ENCODE measurements at regions of chr2 and their contacts with region 1.

Region 1: GRCh38 chr2:183292028-183292427 is 167.8 kb downstream of the NUP35 start:
- DNase-seq: no peak
- H3K4me3 Mint-ChIP-seq: no peak overlapping the region
- H3K27ac Mint-ChIP-seq: no peak overlapping the region
- H3K4me1 Mint-ChIP-seq: no peaks in the 10 kb centered on the region
- H3K27me3 Mint-ChIP-seq: no peaks in the 10 kb centered on the region
- CTCF ChIP-seq: no peak

Region 2: DNA sequence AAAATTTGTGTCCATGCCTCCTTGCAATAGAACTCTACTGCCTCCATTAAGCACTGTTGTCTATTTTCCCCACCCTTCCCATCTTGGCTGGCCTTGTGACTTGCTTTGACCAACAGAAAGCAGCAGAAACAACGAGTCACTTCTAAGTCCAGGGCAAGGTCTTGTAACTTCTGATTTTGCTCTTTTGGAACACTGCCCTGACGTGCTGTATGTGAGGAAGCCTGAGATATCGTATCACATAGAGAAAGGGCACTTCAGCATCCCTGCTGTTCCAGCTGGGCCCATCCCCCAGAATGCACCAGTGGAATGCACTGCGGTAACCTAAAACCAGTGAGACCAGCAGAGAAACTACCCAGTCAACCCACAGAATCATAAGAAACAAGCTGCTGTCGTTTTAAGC is 281.9 kb before region 1 on chr2:
- CTCF ChIA-PET with region 1: no interaction called
- intact Hi-C with region 1: no loop called
- DNase-seq: no peak
- H3K4me3 Mint-ChIP-seq: no peak overlapping the region
- H3K27ac Mint-ChIP-seq: no peak overlapping the region
- H3K4me1 Mint-ChIP-seq: peaks cover 37% of the 10 kb centered on the region
- H3K27me3 Mint-ChIP-seq: no peaks in the 10 kb centered on the region
- CTCF ChIP-seq: no peak

Region 3: GRCh38 chr2:183359867-183360266 is 67.8 kb after region 1 on chr2:
- CTCF ChIA-PET with region 1: no interaction called
- intact Hi-C with region 1: no loop called
- DNase-seq: no peak
- H3K4me3 Mint-ChIP-seq: no peak overlapping the region
- H3K27ac Mint-ChIP-seq: no peak overlapping the region
- H3K4me1 Mint-ChIP-seq: no peaks in the 10 kb centered on the region
- H3K27me3 Mint-ChIP-seq: no peaks in the 10 kb centered on the region
- CTCF ChIP-seq: no peak

Region 4: DNA sequence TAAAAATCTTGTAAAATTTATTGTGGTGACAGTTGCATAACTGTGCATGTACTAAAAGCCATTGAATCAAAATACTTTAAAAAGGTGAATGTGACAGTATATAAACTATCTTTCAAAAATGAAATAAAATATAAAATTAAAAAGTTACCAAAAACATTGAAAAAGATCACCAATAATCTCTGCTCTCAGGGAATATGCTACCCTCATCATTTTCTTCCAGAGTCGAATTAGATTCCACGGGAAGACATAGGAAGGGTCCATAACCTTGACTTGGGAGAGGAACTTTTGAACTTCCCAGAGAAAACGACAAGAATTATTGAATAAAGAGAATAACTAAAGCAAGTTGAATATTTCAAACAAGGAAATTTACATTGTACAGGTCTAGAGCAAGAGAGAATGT is 481.7 kb after region 1 on chr2:
- CTCF ChIA-PET with region 1: no interaction called
- intact Hi-C with region 1: loop called (anchors 5 kb)
- DNase-seq: no peak
- H3K4me3 Mint-ChIP-seq: no peak overlapping the region
- H3K27ac Mint-ChIP-seq: no peak overlapping the region
- H3K4me1 Mint-ChIP-seq: no peaks in the 10 kb centered on the region
- H3K27me3 Mint-ChIP-seq: no peaks in the 10 kb centered on the region
- CTCF ChIP-seq: no peak

Measured in Calu3 (cell line).